ENCODE measurements at regions of chr1 and their contacts with region 1.

Region 1: GRCh38 chr1:110412576-110412975 is 5.1 kb upstream of the LAMTOR5 start:
- DNase-seq: peak; percentile 56
- ATAC-seq: peak; percentile 66
- H3K4me3 Mint-ChIP-seq: peak overlapping the region; percentile 66
- H3K27ac Mint-ChIP-seq: peak overlapping the region; percentile 67
- H3K4me1 Mint-ChIP-seq: peaks cover 23% of the 10 kb centered on the region
- H3K27me3 Mint-ChIP-seq: no peaks in the 10 kb centered on the region
- CTCF ChIP-seq: no peak

Region 2: GRCh38 chr1:110203021-110203661 is 209.4 kb before region 1 on chr1:
- CTCF ChIA-PET with region 1: interaction called, 21 read pairs
- POLR2A ChIA-PET with region 1: no interaction called
- intact Hi-C with region 1: loop called (anchors 1 kb)
- DNase-seq: no peak
- ATAC-seq: peak; percentile 74
- H3K4me3 Mint-ChIP-seq: no peak overlapping the region
- H3K27ac Mint-ChIP-seq: no peak overlapping the region
- H3K4me1 Mint-ChIP-seq: peaks cover 12% of the 10 kb centered on the region
- H3K27me3 Mint-ChIP-seq: no peaks in the 10 kb centered on the region
- CTCF ChIP-seq: peak; percentile 37

Region 3: GRCh38 chr1:110347182-110347893 is 65.2 kb before region 1 on chr1:
- CTCF ChIA-PET with region 1: interaction called, 79 read pairs
- POLR2A ChIA-PET with region 1: no interaction called
- intact Hi-C with region 1: no loop called
- DNase-seq: no peak
- ATAC-seq: no peak
- H3K4me3 Mint-ChIP-seq: peak overlapping the region; percentile 9
- H3K27ac Mint-ChIP-seq: peak overlapping the region; percentile 6
- H3K4me1 Mint-ChIP-seq: peaks cover 85% of the 10 kb centered on the region
- H3K27me3 Mint-ChIP-seq: no peaks in the 10 kb centered on the region
- CTCF ChIP-seq: no peak